WTC11 (cell line): ENCODE measurements at regions of chr15 and their contacts with region 1.

Region 1: GRCh38 chr15:94119923-94120775 is 111.2 kb upstream of the MCTP2 start:
- DNase-seq: peak; percentile 48
- ATAC-seq: peak; percentile 95
- H3K4me3 Mint-ChIP-seq: no peak overlapping the region
- H3K27ac Mint-ChIP-seq: no peak overlapping the region
- H3K4me1 Mint-ChIP-seq: peaks cover 39% of the 10 kb centered on the region
- H3K27me3 Mint-ChIP-seq: no peaks in the 10 kb centered on the region
- CTCF ChIP-seq: peak; percentile 35; the same call in 1 of the 2 replicates

Region 2: DNA sequence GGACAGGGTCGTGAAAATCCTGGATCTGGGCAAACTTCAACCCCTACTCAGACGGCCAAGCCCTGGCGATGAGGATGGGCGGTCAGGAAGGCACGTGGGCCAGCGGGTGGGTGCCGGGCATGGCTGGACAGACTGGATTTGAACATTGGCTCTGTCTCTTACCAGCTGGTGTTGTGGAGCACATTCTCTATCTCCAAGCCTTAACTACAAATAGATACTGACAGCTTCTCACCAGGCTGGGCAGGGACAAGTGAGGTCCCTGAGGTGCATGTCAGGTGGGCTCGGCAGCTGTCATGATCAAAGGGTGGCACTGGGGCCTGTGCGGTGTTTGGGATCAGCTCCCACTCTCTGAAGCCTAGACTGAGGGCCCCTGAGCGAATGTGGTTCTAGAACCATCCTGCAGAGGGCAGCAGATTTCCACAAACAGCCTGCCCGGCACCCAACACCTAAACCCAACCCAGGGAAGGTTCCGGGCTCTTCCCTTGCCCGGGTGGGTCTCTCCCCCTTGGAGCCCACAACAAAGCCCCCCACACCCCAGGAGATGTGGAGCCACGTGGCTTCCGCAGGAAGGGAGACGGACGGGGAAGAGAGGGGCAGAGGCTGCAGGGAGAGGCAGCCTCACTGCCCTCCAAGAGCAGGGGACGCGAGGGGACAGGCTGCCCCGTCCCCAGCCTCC is 1089.6 kb before region 1 on chr15:
- CTCF ChIA-PET with region 1: interaction called, 89 read pairs
- POLR2A ChIA-PET with region 1: no interaction called
- DNase-seq: peak; percentile 84
- ATAC-seq: peak; percentile 84
- H3K4me3 Mint-ChIP-seq: no peak overlapping the region
- H3K27ac Mint-ChIP-seq: no peak overlapping the region
- H3K4me1 Mint-ChIP-seq: peaks cover 28% of the 10 kb centered on the region
- H3K27me3 Mint-ChIP-seq: no peaks in the 10 kb centered on the region
- CTCF ChIP-seq: peak; percentile 90

Region 3: GRCh38 chr15:93072411-93073394 is 1047.4 kb before region 1 on chr15:
- CTCF ChIA-PET with region 1: interaction called, 10 read pairs
- POLR2A ChIA-PET with region 1: no interaction called
- DNase-seq: peak; percentile 89
- ATAC-seq: peak; percentile 78
- H3K4me3 Mint-ChIP-seq: peak overlapping the region; percentile 97
- H3K27ac Mint-ChIP-seq: peak overlapping the region; percentile 92
- H3K4me1 Mint-ChIP-seq: peaks cover 67% of the 10 kb centered on the region
- H3K27me3 Mint-ChIP-seq: peaks cover 16% of the 10 kb centered on the region
- CTCF ChIP-seq: no peak

Region 4: DNA sequence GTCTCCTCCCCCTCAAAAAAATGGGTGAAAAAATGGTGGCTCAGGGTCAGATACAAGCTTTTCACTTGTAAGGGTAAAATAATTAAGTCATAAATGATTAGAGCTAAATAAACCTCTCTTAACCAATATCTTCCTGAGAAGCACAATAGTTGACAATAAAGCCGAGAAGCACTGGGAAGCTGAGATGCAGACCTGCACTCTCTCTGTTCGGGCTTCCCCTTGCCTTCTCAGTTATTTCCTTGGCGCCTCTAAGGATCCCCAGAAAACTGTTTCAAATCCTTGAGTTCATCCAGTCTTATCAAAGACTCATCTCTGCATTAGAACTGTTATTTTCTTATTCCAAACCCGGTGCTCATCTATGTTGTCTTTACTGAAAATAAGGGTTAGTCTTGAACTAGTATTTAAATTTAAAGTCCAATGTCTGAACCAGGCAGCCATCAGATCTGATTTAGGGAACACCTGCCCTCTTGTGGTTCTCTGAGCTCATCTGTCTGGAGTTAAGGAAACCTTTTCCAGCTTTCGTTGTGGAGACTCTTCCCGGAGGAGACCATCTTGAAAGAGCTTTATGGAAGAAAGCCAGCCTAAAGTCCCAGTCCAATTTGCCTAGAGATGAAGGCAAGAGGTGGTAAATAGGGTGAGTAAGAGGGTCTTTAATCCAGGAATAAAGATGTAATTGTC is 145.2 kb before region 1 on chr15:
- CTCF ChIA-PET with region 1: interaction called, 40 read pairs
- POLR2A ChIA-PET with region 1: no interaction called
- DNase-seq: peak; percentile 22
- ATAC-seq: peak; percentile 97
- H3K4me3 Mint-ChIP-seq: peak overlapping the region; percentile 9; the same call in 1 of the 2 replicates
- H3K27ac Mint-ChIP-seq: no peak overlapping the region
- H3K4me1 Mint-ChIP-seq: peaks cover 8% of the 10 kb centered on the region
- H3K27me3 Mint-ChIP-seq: no peaks in the 10 kb centered on the region
- CTCF ChIP-seq: peak; percentile 25; the same call in 1 of the 2 replicates

Region 5: DNA sequence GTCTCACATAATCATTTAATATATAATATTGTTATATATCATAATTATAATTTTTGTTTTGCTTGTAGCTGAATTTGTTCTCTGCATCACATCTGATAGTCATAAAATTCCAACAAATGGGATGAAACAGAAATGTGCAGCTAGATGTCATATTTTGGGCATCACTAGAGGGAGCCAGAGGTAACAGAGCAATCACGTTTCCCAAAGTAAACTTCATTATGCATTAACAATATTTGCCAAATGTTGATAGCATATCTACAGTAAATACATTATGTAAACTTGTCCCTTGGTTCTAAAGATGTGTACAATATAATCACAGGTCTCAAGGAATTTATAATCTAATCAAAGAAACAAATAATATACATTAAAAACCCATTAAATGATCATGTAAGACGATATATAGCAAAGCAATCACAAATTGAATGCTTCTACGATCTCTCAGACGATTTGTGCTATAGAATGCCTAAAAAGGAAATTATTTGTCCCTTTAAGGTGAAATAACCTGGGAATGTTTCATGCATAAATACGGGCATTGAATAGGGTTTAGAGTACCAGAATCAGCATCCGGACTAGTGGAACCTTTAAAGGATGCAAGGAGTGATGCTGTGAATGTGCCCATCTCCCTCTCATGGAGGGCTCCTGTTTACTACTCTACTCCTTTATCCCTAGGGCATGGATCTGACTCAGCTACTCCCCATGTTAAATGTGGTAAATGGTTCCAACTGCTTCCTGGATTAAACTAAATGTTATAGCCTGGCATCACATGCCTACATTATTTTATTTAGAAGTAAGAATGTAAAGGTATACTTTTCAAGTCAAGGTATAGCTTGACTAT is 122.8 kb before region 1 on chr15:
- CTCF ChIA-PET with region 1: interaction called, 75 read pairs
- POLR2A ChIA-PET with region 1: no interaction called
- DNase-seq: no peak
- ATAC-seq: no peak
- H3K4me3 Mint-ChIP-seq: no peak overlapping the region
- H3K27ac Mint-ChIP-seq: no peak overlapping the region
- H3K4me1 Mint-ChIP-seq: no peaks in the 10 kb centered on the region
- H3K27me3 Mint-ChIP-seq: no peaks in the 10 kb centered on the region
- CTCF ChIP-seq: peak; percentile 34

Region 6: GRCh38 chr15:94080418-94080817 is 39.7 kb before region 1 on chr15:
- CTCF ChIA-PET with region 1: interaction called, 14 read pairs
- POLR2A ChIA-PET with region 1: no interaction called
- DNase-seq: peak; percentile 23
- ATAC-seq: peak; percentile 81
- H3K4me3 Mint-ChIP-seq: no peak overlapping the region
- H3K27ac Mint-ChIP-seq: no peak overlapping the region
- H3K4me1 Mint-ChIP-seq: peaks cover 13% of the 10 kb centered on the region
- H3K27me3 Mint-ChIP-seq: no peaks in the 10 kb centered on the region
- CTCF ChIP-seq: no peak

Region 7: GRCh38 chr15:94212291-94212690 is 92.1 kb after region 1 on chr15:
- CTCF ChIA-PET with region 1: no interaction called
- POLR2A ChIA-PET with region 1: no interaction called
- DNase-seq: no peak
- ATAC-seq: no peak
- H3K4me3 Mint-ChIP-seq: no peak overlapping the region
- H3K27ac Mint-ChIP-seq: no peak overlapping the region
- H3K4me1 Mint-ChIP-seq: no peaks in the 10 kb centered on the region
- H3K27me3 Mint-ChIP-seq: no peaks in the 10 kb centered on the region
- CTCF ChIP-seq: no peak

Region 8: GRCh38 chr15:94324117-94324826 is 204.1 kb after region 1 on chr15:
- CTCF ChIA-PET with region 1: interaction called, 10 read pairs
- POLR2A ChIA-PET with region 1: no interaction called
- DNase-seq: peak; percentile 43
- ATAC-seq: peak; percentile 94
- H3K4me3 Mint-ChIP-seq: no peak overlapping the region
- H3K27ac Mint-ChIP-seq: no peak overlapping the region
- H3K4me1 Mint-ChIP-seq: peaks cover 13% of the 10 kb centered on the region
- H3K27me3 Mint-ChIP-seq: no peaks in the 10 kb centered on the region
- CTCF ChIP-seq: peak; percentile 81